ENCODE measurements at regions of chr11 and their contacts with region 1.

Region 1: DNA sequence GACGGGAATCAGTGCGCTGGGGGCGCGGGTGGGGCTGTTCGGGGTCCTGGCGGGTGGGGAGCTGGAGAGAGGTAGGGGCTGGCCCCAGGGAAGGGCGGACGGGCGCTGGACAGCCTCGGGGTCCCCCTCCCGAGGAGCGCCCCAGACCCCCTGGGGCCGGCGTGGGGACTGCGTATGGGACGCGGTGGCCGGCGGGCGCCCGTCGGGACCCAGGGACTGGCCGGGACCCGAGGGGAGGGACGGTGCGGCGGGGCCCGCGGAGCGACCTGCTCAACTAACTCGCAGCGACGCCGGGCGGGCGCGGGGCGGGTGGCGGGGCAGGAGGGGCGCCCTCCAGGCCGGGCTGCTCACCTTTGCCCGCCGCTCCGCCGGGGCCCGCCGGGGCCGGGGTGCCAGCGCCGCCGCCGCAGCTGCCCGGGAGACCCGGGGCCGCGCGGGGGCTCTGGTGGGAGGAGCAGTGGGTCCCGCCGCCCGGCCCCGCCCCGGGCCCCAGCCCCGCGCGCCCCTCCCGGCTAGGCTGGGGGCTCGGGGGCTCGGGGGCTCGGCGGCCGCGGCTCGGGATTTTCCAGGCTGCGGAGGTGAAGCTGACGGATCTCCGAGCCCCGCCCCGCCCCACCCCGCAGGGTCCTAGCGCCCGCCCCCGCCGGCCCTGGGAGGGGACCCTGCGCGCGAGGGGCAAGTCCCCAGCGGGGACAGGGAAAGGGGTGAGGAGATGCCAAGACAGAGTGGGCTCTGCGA is 12.4 kb downstream of the STARD10 start:
- DNase-seq: no peak
- H3K4me3 ChIP-seq: peak overlapping the region; percentile 39 to 66 (median 49)
- H3K27ac ChIP-seq: no peak overlapping the region
- H3K4me1 ChIP-seq: peaks cover 18% of the 10 kb centered on the region
- H3K27me3 ChIP-seq: no peaks in the 10 kb centered on the region
- CTCF ChIP-seq: no peak

Region 2: GRCh38 chr11:72683782-72684200 is 97.7 kb before region 1 on chr11:
- CTCF ChIA-PET with region 1: no interaction called
- dilution Hi-C with region 1: no loop called
- in situ Hi-C with region 1: no loop called
- intact Hi-C with region 1: no loop called
- DNase-seq: no peak
- H3K4me3 ChIP-seq: no peak overlapping the region
- H3K27ac ChIP-seq: no peak overlapping the region
- H3K4me1 ChIP-seq: peaks cover 4% of the 10 kb centered on the region
- H3K27me3 ChIP-seq: no peaks in the 10 kb centered on the region
- CTCF ChIP-seq: peak; percentile 88 to 94

Region 3: DNA sequence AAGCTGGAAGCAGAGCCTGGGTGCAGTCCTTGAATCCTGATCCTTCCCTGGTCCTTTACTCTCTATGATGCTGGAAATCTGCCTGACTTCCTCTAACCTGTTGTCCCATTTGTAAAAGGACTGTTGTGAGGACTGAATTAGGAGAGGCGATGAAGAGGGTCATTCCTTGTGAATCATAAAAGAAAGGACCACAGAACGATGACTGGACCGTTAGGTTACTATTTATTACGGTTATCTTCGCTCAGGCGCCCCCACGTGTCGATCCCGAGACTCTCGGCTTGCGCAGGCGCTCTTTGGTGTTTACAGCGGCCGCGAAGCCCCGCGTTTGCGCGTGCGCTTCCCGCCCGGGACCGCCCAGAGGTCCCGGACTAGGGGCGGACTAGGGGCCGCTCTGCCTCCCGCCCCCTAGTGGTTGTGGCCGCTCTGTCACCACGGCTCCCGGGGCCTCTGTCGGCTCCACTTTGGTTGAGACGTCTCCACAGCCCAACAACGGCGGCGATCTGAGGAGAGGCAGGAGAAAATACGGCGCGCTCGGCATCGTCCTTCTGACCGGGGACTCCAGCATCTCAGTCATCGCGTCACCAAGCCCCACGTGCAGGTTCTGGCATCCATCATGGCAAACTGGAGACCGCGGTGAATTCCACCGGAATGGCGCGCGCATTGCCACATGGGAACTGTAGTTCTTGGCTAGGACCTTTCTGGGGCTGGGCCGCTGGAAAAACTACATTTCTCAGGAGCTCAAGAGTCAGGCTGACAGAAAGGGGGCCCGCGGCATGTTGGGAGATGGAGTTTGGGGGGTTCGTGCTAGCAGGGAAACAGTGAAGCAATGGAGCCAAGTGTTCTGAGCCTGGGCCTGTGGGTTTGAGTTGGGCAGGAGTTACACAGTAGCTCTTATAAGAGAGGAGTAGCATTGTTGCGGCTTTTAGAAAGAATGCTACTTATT is 12.2 kb after region 1 on chr11 and contains the start of gene STARD10:
- CTCF ChIA-PET with region 1: no interaction called
- dilution Hi-C with region 1: no loop called
- in situ Hi-C with region 1: no loop called
- intact Hi-C with region 1: loop called (anchors 1 kb)
- DNase-seq: peak; percentile 94
- H3K4me3 ChIP-seq: peak within 1 kb of the TSS; percentile 63 to 69 (median 68)
- H3K27ac ChIP-seq: peak within 1 kb of the TSS; percentile 60
- H3K4me1 ChIP-seq: peaks cover 25% of the 10 kb centered on the region
- H3K27me3 ChIP-seq: no peaks in the 10 kb centered on the region
- CTCF ChIP-seq: peak; percentile 61 to 92
- total RNA-seq, gene STARD10: 32.8 to 63.0 TPM

Region 4: DNA sequence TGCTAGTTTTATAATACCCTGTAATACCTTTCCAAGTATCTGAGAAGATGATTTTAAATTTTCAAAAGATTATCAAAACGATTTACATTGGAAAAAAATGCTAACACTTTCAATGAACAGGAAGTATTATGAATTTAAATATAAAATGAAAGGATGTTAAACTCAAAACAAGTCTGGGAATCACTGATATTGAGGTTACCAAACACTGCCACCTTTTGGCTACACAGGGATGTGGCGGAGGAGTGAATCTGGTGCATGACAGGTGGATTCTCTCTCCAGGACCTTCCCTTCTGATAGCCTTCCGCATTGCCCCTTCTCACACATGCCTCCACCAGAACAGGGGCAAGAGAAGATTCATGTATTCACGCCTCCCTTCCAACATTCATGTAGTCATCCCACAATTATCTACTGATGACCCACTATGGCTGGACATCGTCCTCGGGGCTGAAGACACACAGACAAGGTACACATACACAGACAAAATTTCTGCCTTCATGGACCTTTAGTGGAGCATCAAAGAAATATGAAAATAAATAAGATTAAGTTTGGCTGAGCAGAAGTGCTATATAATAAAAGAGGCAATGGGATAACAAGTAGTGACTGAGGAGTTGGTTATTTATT is 67.5 kb after region 1 on chr11:
- CTCF ChIA-PET with region 1: no interaction called
- dilution Hi-C with region 1: no loop called
- in situ Hi-C with region 1: no loop called
- intact Hi-C with region 1: no loop called
- DNase-seq: peak; percentile 22
- H3K4me3 ChIP-seq: no peak overlapping the region
- H3K27ac ChIP-seq: no peak overlapping the region
- H3K4me1 ChIP-seq: no peaks in the 10 kb centered on the region
- H3K27me3 ChIP-seq: no peaks in the 10 kb centered on the region
- CTCF ChIP-seq: peak; percentile 68 to 83

Measured in mammary epithelial cell (primary cell).